B cell (primary cell): ENCODE measurements at regions of chr7 and their contacts with region 1.

Region 1: DNA sequence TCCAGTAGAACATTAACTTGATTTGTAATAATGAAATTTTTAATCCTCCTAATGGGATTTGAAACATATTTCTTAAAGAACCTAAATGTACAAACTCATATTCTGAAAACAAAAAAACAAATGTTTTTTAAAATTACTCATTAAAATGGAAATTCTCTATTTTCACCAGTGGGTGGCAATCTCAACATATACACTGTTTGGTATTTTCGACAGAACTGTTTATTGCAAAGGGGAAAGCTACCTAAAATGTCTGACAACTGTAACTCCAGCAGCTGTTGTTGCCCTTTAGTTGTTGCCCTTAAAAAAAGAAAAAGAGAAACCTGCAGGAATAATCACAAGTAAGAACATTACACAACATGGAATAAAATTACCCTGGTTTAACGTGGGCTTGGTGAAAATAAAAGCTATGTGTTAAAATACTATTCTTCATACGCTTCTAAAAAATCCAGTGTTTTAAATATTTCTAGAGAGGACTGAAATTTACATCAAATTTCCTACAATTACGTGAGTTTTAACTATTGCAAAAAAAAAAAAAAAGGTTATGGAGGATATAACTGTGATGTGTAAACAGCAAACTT is 54.5 kb downstream of the COL1A2 start:
- DNase-seq: peak; percentile 54
- ATAC-seq: no peak
- H3K4me3 ChIP-seq: no peak overlapping the region
- H3K4me3 Mint-ChIP-seq: no peak overlapping the region
- H3K27ac ChIP-seq: no peak overlapping the region
- H3K27ac Mint-ChIP-seq: no peak overlapping the region
- H3K4me1 ChIP-seq: no peaks in the 10 kb centered on the region
- H3K4me1 Mint-ChIP-seq: no peaks in the 10 kb centered on the region
- H3K27me3 ChIP-seq: peaks cover 0 to 6% (median 0%) of the 10 kb centered on the region in 4 experiments
- H3K27me3 Mint-ChIP-seq: peaks cover 10% of the 10 kb centered on the region
- CTCF ChIP-seq: peak; percentile 83

Region 2: DNA sequence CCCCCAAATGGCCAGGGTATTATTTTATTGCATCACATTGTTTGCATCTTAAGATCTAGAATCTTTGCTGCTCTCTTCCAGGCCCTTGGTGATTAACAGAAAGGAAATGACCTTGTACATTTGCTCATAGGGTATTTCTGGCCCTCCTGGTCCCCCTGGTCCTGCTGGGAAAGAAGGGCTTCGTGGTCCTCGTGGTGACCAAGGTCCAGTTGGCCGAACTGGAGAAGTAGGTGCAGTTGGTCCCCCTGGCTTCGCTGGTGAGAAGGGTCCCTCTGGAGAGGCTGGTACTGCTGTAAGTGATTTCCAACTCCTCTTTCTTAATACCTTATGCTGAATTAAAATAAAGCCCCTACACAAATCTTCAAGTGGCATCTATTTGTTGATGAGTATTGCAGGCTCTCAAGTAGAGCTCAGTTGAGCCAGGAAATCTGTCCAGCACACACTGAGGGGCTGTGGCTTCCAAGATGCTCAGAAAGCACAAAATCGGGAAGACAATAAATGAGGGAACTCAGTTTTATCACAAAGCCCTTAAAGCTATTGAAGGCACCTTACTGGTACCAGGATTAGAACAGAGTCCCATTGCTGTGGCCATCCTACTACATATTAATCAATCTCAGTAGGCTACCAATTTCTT is 26.3 kb before region 1 on chr7:
- CTCF ChIA-PET with region 1: no interaction called
- POLR2A ChIA-PET with region 1: no interaction called
- intact Hi-C with region 1: no loop called
- DNase-seq: no peak
- ATAC-seq: no peak
- H3K4me3 ChIP-seq: no peak overlapping the region
- H3K4me3 Mint-ChIP-seq: no peak overlapping the region
- H3K27ac ChIP-seq: no peak overlapping the region
- H3K27ac Mint-ChIP-seq: no peak overlapping the region
- H3K4me1 ChIP-seq: no peaks in the 10 kb centered on the region
- H3K4me1 Mint-ChIP-seq: no peaks in the 10 kb centered on the region
- H3K27me3 ChIP-seq: peaks cover 0 to 5% (median 0%) of the 10 kb centered on the region in 4 experiments
- H3K27me3 Mint-ChIP-seq: peaks cover 25% of the 10 kb centered on the region
- CTCF ChIP-seq: no peak

Region 3: GRCh38 chr7:94436018-94436604 is 13.1 kb before region 1 on chr7:
- CTCF ChIA-PET with region 1: interaction called, 59 read pairs
- POLR2A ChIA-PET with region 1: no interaction called
- intact Hi-C with region 1: no loop called
- DNase-seq: peak; percentile 71
- ATAC-seq: peak; percentile 78
- H3K4me3 ChIP-seq: no peak overlapping the region
- H3K4me3 Mint-ChIP-seq: no peak overlapping the region
- H3K27ac ChIP-seq: no peak overlapping the region
- H3K27ac Mint-ChIP-seq: no peak overlapping the region
- H3K4me1 ChIP-seq: no peaks in the 10 kb centered on the region
- H3K4me1 Mint-ChIP-seq: no peaks in the 10 kb centered on the region
- H3K27me3 ChIP-seq: peaks cover 0 to 14% (median 7%) of the 10 kb centered on the region in 4 experiments
- H3K27me3 Mint-ChIP-seq: peaks cover 26% of the 10 kb centered on the region
- CTCF ChIP-seq: peak; percentile 90

Region 4: DNA sequence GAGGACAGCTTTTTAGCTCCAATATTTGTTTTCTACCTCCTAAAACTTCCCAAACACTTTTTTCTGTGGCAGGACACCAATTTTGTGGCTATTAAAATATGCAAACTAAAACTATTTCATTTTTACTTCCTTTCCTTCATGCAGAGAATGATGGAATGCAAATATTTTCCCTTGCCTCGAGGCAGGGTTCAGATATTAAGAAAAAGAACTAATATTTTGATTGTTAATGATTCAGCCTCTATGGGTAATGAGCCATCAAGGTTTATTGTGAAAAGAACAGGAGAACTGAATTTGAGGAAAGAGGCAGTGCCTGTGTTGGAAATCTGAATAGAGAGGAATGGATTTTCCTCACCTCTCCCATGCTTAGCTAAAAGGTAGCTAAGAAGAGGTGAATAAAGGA is 17.3 kb after region 1 on chr7:
- CTCF ChIA-PET with region 1: interaction called, 11 read pairs
- POLR2A ChIA-PET with region 1: no interaction called
- intact Hi-C with region 1: no loop called
- DNase-seq: no peak
- ATAC-seq: no peak
- H3K4me3 ChIP-seq: no peak overlapping the region
- H3K4me3 Mint-ChIP-seq: no peak overlapping the region
- H3K27ac ChIP-seq: no peak overlapping the region
- H3K27ac Mint-ChIP-seq: no peak overlapping the region
- H3K4me1 ChIP-seq: no peaks in the 10 kb centered on the region
- H3K4me1 Mint-ChIP-seq: no peaks in the 10 kb centered on the region
- H3K27me3 ChIP-seq: peaks cover 0 to 4% (median 0%) of the 10 kb centered on the region in 4 experiments
- H3K27me3 Mint-ChIP-seq: peaks cover 4% of the 10 kb centered on the region
- CTCF ChIP-seq: no peak

Region 5: DNA sequence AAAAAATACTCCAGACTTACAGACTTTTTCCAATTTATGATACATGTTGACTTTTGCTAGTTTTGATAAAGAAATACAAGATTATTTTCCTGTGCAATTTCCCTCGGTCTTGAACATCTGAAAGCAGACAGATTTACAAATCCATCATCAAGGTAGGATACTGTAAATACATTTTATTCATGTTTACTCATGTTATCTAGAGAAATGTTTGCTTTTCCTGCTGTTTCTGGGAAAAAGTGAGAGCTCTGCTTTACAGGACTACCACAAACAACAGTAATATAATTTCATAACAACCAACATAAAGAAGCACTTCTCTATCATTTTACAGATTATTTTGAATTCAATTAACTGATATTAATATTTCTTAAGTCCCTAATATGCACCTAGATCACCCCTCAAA is 28.6 kb after region 1 on chr7:
- CTCF ChIA-PET with region 1: no interaction called
- POLR2A ChIA-PET with region 1: no interaction called
- intact Hi-C with region 1: no loop called
- DNase-seq: no peak
- ATAC-seq: no peak
- H3K4me3 ChIP-seq: no peak overlapping the region
- H3K4me3 Mint-ChIP-seq: no peak overlapping the region
- H3K27ac ChIP-seq: no peak overlapping the region
- H3K27ac Mint-ChIP-seq: no peak overlapping the region
- H3K4me1 ChIP-seq: no peaks in the 10 kb centered on the region
- H3K4me1 Mint-ChIP-seq: no peaks in the 10 kb centered on the region
- H3K27me3 ChIP-seq: no peaks in the 10 kb centered on the region
- H3K27me3 Mint-ChIP-seq: peaks cover 8% of the 10 kb centered on the region
- CTCF ChIP-seq: no peak

Region 6: DNA sequence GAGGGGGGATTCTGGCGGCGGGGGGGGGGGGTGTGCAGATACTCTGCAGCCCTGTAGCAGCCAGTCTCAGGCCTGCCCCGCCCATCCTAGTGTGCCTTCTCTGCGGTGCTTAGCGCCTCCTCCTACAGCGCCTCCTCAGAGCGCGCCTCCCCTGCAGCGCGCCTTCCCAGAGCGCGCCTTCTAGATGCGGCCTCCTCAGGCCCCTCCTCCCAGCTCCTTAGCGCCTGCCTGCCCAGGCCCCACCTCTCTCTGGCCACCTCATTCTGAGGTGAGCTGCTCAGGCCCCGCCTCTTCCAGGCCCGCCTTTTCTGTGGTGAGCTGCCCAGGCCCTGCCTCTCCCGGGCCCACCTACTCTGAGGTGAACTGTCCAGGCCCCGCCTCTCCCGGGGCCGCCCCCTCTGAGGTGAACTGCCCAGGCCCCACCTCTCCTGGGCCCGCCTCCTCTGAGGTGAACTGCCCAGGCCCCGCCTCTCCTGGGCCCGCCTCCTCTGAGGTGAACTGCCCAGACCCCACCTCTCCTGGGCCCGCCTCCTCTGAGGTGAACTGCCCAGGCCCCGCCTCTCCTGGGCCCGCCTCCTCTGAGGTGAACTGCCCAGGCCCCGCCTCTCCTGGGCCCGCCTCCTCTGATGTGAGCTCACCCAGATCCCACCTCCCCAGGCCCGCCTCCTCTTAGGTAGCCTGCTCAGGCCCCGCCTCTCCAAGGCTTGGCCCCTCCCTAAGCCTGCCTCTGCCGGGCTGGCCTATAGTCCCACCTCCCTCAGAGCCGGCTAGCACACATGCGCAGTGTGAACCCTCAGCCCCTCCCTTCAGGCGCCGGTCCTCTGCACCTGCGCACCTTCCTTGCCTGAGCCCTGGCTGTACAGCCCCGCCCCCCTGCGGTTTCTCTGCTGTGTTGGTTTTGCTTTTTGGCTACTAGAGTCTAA is 208.8 kb after region 1 on chr7:
- CTCF ChIA-PET with region 1: interaction called, 27 read pairs
- POLR2A ChIA-PET with region 1: interaction called, 3 read pairs
- intact Hi-C with region 1: loop called (anchors 5 kb)
- DNase-seq: peak; percentile 97
- ATAC-seq: peak; percentile 78
- H3K4me3 ChIP-seq: peak overlapping the region in 4 of 5 experiments; percentile 45 to 71 (median 64)
- H3K4me3 Mint-ChIP-seq: peak overlapping the region; percentile 94
- H3K27ac ChIP-seq: no peak overlapping the region
- H3K27ac Mint-ChIP-seq: peak overlapping the region; percentile 82
- H3K4me1 ChIP-seq: peaks cover 16 to 29% of the 10 kb centered on the region in 2 donors
- H3K4me1 Mint-ChIP-seq: peaks cover 26% of the 10 kb centered on the region
- H3K27me3 ChIP-seq: peaks cover 0 to 18% (median 13%) of the 10 kb centered on the region in 4 experiments
- H3K27me3 Mint-ChIP-seq: peaks cover 14% of the 10 kb centered on the region
- CTCF ChIP-seq: no peak

Region 7: GRCh38 chr7:94803821-94804220 is 354.6 kb after region 1 on chr7:
- CTCF ChIA-PET with region 1: no interaction called
- POLR2A ChIA-PET with region 1: no interaction called
- intact Hi-C with region 1: no loop called
- DNase-seq: no peak
- ATAC-seq: no peak
- H3K4me3 ChIP-seq: no peak overlapping the region
- H3K4me3 Mint-ChIP-seq: no peak overlapping the region
- H3K27ac ChIP-seq: no peak overlapping the region
- H3K27ac Mint-ChIP-seq: no peak overlapping the region
- H3K4me1 ChIP-seq: no peaks in the 10 kb centered on the region
- H3K4me1 Mint-ChIP-seq: no peaks in the 10 kb centered on the region
- H3K27me3 ChIP-seq: no peaks in the 10 kb centered on the region
- H3K27me3 Mint-ChIP-seq: no peaks in the 10 kb centered on the region
- CTCF ChIP-seq: no peak

Region 8: DNA sequence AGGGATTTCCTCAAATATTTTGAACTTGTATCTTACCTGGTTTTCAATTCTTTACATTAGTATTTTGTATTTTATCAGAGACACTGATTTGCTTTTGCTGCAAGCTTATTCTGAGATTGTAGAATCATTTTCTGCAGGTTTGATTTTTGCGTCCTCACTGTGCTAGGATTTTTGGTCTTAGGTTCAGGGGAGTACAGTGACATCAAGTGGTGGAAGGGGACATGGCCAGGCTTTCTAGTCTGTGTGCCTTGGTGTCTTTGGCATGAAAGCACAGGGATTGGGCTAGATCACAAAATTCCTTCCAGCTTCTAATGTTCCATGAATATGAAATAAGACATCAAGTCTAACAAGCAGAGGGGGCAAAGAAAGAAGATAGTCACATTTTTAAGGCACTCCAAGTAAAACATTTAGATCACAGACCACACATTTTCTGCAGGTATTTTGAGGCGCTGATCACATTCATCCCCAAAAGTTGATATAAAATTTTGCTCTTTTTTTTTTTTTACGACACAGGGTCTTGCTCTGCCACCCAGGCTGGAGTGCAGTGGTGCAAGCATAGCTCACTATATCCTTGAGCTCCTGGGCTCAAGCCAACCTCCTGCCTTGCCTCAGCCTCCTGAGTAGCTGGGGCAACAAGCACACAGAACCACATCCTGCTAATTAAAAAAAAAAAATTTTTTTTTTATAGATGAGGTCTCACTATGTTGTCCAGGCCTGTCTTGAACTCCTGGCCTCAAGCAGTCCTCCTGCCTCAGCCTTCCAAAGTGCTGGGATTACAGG is 750.7 kb after region 1 on chr7:
- CTCF ChIA-PET with region 1: interaction called, 15 read pairs
- POLR2A ChIA-PET with region 1: no interaction called
- intact Hi-C with region 1: no loop called
- DNase-seq: peak; percentile 13
- ATAC-seq: no peak
- H3K4me3 ChIP-seq: no peak overlapping the region
- H3K4me3 Mint-ChIP-seq: no peak overlapping the region
- H3K27ac ChIP-seq: no peak overlapping the region
- H3K27ac Mint-ChIP-seq: no peak overlapping the region
- H3K4me1 ChIP-seq: no peaks in the 10 kb centered on the region
- H3K4me1 Mint-ChIP-seq: no peaks in the 10 kb centered on the region
- H3K27me3 ChIP-seq: no peaks in the 10 kb centered on the region
- H3K27me3 Mint-ChIP-seq: no peaks in the 10 kb centered on the region
- CTCF ChIP-seq: no peak

Region 9: DNA sequence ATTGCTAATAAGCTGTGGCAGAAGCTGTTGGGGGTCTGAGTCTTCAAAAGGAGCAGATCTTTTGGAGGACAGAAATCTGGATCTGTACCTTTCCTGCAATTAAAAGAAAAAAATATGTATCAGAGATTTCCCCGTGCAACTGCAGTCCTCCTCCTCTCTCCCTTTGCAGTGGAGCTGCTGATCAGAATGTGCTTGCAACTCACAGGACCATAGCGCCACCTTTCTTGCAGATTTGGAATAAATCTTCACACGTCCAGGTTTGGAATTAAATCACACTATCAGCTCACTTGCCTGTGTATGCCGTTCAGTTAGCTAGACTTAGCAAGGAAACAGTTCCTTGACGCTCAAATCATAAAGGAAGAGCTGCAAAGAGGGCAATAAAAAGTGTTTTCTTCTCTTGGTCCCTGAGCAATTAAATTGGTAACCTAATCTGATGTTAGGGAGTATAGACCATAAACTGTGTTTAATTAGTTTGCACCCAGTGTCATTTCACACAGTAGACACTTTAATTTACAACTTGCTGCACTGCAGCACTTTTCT is 797.7 kb after region 1 on chr7:
- CTCF ChIA-PET with region 1: interaction called, 25 read pairs
- POLR2A ChIA-PET with region 1: no interaction called
- intact Hi-C with region 1: loop called (anchors 5 kb)
- DNase-seq: peak; percentile 35
- ATAC-seq: no peak
- H3K4me3 ChIP-seq: no peak overlapping the region
- H3K4me3 Mint-ChIP-seq: no peak overlapping the region
- H3K27ac ChIP-seq: no peak overlapping the region
- H3K27ac Mint-ChIP-seq: no peak overlapping the region
- H3K4me1 ChIP-seq: no peaks in the 10 kb centered on the region
- H3K4me1 Mint-ChIP-seq: no peaks in the 10 kb centered on the region
- H3K27me3 ChIP-seq: no peaks in the 10 kb centered on the region
- H3K27me3 Mint-ChIP-seq: no peaks in the 10 kb centered on the region
- CTCF ChIP-seq: peak; percentile 55